HEK293 (cell line): ENCODE measurements at regions of chr2 and their contacts with region 1.

Region 1: GRCh38 chr2:219530048-219530963 is 13.3 kb downstream of the CHPF start:
- H3K4me3 ChIP-seq: no peak overlapping the region
- H3K27ac ChIP-seq: no peak overlapping the region
- H3K4me1 ChIP-seq: no peaks in the 10 kb centered on the region
- CTCF ChIP-seq: peak; percentile 95

Region 2: DNA sequence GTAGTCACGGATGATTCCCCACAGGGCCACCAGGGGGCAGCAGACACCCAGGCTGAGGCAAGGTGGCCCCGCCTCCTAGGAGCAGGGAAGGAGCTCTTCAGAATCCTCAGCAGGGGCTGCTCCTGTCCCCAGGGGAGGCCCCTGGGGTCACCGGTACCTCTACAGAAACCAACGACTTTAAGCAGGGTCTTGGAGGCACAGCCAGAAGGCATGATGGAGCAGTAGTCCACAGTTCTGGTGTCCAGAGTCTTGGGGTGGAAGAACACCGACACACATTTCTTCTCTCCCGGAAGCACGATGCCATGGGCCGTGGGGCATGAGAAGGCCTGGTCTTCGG is 500.5 kb before region 1 on chr2:
- CTCF ChIA-PET with region 1: no interaction called
- POLR2A ChIA-PET with region 1: no interaction called
- H3K4me3 ChIP-seq: no peak overlapping the region
- H3K27ac ChIP-seq: no peak overlapping the region
- H3K4me1 ChIP-seq: no peaks in the 10 kb centered on the region
- CTCF ChIP-seq: peak; percentile 93

Region 3: DNA sequence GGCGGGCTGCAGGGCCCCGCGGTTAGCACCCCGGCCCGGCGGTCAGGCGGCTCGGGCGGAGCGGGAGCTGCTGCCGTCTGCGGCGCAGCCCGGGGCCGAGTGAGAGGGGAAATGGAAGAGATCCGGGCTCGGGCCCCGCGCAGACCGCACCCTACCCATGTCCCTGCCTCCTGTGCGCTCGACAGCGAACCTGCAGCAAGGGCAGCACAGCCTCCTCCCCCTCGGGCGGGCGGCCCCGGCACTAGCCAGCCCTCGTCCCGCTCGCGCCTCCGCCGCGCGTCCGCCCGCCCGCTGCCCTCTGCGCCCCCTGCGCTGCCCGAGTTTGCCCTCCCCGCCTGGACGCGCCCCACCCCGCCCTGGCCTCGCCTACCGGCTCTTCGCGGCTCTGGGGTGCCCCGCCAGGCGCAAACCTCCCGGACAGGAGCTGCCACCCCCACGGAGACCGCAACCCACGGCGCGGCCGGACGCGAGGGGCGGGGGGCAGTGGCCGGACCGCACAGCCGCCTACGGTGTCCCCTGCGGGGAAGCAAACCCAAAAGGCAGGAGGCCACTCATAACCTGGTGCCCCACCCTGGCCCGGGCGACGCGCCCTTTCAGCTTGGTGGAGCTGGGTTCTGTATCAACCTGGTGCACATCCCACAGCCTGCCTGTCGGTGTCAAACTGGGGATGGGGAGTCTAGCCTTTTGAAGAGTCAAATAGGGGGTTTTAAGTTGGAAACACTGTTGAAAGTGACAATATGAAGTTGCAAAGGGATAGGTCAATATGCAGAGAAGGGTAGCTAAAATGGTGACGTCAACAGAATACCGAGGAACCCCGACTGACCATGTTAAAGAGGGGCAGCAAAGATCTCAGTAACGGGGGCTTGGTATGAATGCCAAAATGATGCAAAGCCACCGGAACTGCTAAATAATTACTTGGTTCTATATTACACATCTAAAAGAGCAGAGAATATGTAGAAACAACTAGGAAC is 469.2 kb before region 1 on chr2 and contains the start of gene IHH:
- CTCF ChIA-PET with region 1: no interaction called
- POLR2A ChIA-PET with region 1: no interaction called
- H3K4me3 ChIP-seq: peak within 1 kb of the TSS; percentile 36
- H3K27ac ChIP-seq: no peak within 1 kb of the TSS
- H3K4me1 ChIP-seq: no peaks in the 10 kb centered on the region; the same call in 1 of the 2 replicates
- CTCF ChIP-seq: no peak

Region 4: DNA sequence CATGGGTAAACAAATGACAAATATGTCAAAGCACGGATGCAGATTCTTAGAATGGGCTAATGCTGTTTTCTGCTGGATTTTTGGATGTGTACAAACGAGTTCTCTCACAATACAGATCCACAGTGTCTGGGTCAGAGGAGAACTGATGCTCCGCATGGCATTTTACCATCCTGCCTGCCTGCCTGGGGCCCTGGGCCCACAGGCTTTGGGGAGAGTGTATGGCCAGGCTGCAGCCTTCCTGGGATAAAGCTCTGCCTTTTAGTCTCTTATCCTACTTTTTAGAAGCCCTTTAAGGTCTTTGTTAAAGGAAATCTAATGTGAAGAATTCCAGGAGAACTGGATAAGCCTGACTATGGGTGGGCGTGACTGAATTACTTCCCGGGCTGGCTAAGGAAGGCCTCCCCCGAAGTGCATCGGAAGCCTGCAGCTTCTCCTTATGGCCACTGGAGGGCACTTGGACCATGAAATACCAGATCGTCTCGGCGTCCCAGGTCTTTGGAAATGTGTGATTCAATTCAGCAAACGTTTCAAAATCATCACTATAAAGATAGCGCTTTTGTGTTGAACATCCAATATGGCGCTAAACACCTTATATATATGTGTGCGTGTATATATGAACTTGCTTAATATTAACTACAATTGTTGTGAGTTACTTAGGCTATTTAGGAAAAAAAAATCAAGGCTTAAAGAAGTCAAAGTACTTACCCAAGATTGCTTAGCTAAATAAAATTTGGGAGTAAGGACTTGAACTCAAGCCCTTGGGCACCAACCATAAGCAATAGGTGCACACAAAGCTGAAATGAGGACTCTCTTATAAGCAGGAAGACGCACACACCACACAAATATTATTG is 127.4 kb before region 1 on chr2:
- CTCF ChIA-PET with region 1: interaction called, 196 read pairs
- POLR2A ChIA-PET with region 1: interaction called, 4 read pairs
- H3K4me3 ChIP-seq: no peak overlapping the region
- H3K27ac ChIP-seq: no peak overlapping the region
- H3K4me1 ChIP-seq: peaks cover 19% of the 10 kb centered on the region
- CTCF ChIP-seq: peak; percentile 69

Region 5: DNA sequence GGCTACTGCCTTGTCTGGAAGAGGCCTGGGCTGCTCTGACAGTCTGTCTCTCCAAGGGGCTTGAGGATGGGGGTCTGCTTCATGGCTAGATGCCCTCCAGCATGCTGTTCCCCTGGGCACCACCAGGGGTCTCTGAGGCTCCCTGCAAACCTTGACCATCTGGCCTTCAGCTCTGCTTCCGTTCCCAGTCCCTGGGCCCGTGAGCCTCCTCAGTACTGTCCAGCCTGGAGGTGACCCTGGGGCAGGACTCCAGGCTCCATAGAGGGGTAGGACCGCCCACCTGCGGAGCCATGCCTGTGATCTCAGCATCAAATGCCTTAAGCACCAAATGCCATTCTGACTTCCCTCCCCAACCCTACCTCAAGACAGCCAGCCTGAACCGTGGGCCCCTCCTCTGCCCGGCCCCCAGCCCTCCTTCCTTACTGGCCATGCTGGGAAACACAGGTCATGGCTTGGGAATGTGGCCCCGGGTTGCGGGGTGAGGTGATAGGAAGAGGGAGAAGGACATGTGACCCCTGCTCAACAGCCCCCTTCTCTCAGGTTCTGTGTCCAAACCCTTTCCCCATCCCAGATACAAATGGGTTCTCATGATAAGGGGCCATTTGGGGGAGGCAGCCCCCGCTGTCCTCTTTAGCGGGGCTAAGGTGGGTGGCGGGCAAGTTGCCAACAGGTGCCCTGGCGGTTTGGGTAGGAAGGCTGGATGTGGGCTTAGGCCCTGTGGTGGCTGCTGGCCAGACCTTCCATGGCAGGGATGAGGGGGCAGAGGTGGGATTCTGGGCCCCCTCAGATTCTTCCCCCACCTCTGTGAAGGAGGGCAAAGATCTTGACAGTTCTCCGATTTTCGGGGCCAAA is 70.6 kb before region 1 on chr2:
- CTCF ChIA-PET with region 1: interaction called, 30 read pairs
- POLR2A ChIA-PET with region 1: no interaction called
- H3K4me3 ChIP-seq: no peak overlapping the region
- H3K27ac ChIP-seq: no peak overlapping the region
- H3K4me1 ChIP-seq: peaks cover 2% of the 10 kb centered on the region; the same call in 1 of the 2 replicates
- CTCF ChIP-seq: peak; percentile 77

Region 6: GRCh38 chr2:219475697-219476651 is 54.3 kb before region 1 on chr2:
- CTCF ChIA-PET with region 1: interaction called, 156 read pairs
- POLR2A ChIA-PET with region 1: no interaction called
- H3K4me3 ChIP-seq: no peak overlapping the region
- H3K27ac ChIP-seq: no peak overlapping the region
- H3K4me1 ChIP-seq: 0 out of 2 replicates have a peak, but pooled peaks cover 2% of the 10 kb centered on the region
- CTCF ChIP-seq: peak; percentile 83

Region 7: DNA sequence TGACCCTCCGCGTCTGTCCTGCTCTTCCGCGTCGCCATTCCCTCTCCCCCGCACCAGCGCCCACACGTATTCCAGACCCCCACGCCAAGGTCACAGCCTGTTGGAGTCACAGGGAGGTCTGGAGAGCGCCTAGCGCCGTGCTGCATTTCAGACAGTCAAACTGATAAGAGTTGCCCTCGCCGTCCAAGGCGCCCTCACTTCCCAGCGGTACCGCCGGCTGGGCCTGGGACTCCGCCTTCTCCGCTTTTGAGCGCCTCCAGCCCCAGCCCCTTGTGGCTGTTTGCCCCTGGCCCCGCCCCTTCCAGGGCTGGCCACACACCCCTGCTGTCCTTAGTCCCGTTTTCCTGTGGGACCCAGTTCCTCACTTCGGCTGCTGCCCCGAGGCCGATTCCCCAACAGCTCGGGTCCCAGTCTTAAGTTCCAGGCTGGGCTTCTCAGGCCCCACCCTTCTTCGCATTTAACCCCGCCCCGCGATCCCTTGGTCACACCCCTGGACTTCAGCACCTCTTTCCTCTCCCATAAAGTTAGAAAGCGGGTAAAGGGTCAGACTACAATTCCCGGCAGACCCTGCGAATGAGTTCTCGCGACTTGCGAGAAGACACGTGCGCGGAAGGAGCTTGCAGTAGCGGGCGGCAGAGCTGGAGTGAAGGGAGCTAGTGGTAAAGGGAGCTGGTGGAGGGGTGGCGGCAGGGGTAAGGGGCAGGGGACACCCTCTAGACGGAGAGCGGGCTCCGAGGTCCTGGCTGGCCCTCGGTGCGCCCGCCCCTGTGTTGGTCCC is 31.8 kb before region 1 on chr2 and contains the start of gene GMPPA:
- CTCF ChIA-PET with region 1: interaction called, 252 read pairs
- POLR2A ChIA-PET with region 1: interaction called, 8 read pairs
- H3K4me3 ChIP-seq: peak within 1 kb of the TSS; percentile 69
- H3K27ac ChIP-seq: peak within 1 kb of the TSS; percentile 33; the same call in 1 of the 2 replicates
- H3K4me1 ChIP-seq: peaks cover 8% of the 10 kb centered on the region; the same call in 1 of the 2 replicates
- CTCF ChIP-seq: peak; percentile 28; the same call in 1 of the 2 replicates

Region 8: GRCh38 chr2:219543601-219544358 is 13.5 kb after region 1 on chr2 and contains the starts of genes CHPF and TMEM198:
- CTCF ChIA-PET with region 1: interaction called, 68 read pairs
- POLR2A ChIA-PET with region 1: no interaction called
- H3K4me3 ChIP-seq: peak within 1 kb of the TSS; percentile 69
- H3K27ac ChIP-seq: peak within 1 kb of the TSS; percentile 73; the same call in 1 of the 2 replicates
- H3K4me1 ChIP-seq: no peaks in the 10 kb centered on the region
- CTCF ChIP-seq: no peak

Region 9: DNA sequence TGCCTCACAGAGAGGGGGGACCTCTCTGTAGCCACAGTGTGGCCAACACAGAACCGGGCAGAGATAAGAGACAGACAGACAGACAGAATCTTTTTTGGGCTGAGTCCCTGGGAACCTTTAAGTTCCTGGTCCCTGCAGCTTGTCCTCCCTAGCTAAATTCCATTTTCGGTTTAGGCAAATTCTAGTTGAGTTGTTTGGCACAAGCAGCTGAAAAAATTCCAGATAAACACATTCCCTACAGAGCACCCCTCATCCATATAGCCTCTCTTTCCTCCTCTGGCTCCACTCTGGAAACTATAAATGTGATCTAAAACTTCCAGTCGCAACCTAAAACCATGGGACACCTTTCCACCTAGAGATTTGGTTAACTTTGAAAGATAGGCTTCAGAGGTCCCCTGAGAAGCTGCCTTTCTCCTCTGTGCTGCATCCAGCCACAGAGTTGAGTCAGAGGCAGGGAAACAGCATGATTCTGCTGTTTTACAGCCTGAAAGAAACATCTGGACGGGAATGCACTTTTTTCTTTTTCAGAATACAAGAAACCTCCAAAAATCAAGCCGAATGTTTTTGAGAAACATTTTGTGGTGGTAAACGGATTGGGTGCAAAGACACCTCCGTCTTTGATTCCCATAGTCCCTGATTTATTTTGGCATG is 128.0 kb after region 1 on chr2:
- CTCF ChIA-PET with region 1: no interaction called
- POLR2A ChIA-PET with region 1: no interaction called
- H3K4me3 ChIP-seq: no peak overlapping the region
- H3K27ac ChIP-seq: no peak overlapping the region
- H3K4me1 ChIP-seq: no peaks in the 10 kb centered on the region
- CTCF ChIP-seq: no peak